IMR-90 (cell line): ENCODE measurements at regions of chr2 and their contacts with region 1.

Region 1: DNA sequence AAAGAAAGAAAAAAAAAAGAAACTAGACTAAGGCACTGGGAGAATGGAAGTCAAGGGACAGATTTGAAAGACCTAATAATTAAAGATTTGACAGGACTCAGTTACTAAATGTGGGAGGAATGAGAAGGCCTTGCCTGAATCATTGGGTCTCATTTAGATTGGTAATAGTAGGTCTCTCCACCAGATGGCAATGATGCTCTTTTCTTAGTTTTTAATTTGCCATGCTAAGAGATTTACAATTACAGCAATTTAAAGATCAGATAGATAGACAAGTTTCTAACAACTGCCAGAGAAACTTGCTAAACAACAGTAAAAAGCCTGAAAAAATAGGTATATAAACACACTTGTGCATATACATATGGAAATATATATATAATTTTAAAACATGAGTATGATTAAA is 153.0 kb downstream of the TMEM247 start:
- DNase-seq: peak; percentile 77
- ATAC-seq: peak; percentile 89
- H3K4me3 ChIP-seq: no peak overlapping the region
- H3K27ac ChIP-seq: no peak overlapping the region
- H3K4me1 ChIP-seq: 0 out of 2 replicates have a peak, but pooled peaks cover 1% of the 10 kb centered on the region
- H3K27me3 ChIP-seq: no peaks in the 10 kb centered on the region
- CTCF ChIP-seq: peak; percentile 78
- POLR2A ChIP-seq: no peak
- RAD21 ChIP-seq: peak; percentile 84

Region 2: DNA sequence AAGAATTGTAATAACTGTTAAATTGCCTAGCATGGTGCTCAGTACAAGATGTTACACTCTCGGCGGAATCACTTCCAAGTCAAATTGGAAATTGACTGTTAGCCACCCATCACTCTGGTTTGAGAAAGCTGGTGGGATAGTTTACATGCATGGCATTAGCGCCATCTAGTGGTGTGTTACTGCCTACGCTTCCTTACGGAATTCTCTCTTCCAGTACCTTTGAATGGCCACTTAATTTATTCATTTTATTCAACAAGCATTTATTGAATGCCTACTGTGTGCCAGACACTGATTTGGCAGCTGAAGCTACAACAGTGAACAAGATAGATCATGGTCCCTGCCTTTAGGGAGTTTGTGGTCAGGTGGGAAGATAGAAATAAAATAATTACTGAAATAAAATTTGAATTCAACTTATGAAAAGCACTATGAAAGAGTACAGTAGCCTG is 18.2 kb after region 1 on chr2:
- CTCF ChIA-PET with region 1: interaction called, 5 read pairs
- POLR2A ChIA-PET with region 1: no interaction called
- dilution Hi-C with region 1: no loop called
- in situ Hi-C with region 1: no loop called
- intact Hi-C with region 1: loop called (anchors 1 kb)
- DNase-seq: peak; percentile 90
- ATAC-seq: peak; percentile 25
- H3K4me3 ChIP-seq: no peak overlapping the region
- H3K27ac ChIP-seq: no peak overlapping the region
- H3K4me1 ChIP-seq: peaks cover 28% of the 10 kb centered on the region
- H3K27me3 ChIP-seq: no peaks in the 10 kb centered on the region
- CTCF ChIP-seq: peak; percentile 95
- POLR2A ChIP-seq: peak; percentile 37; the same call in 1 of the 2 replicates
- RAD21 ChIP-seq: peak; percentile 90

Region 3: DNA sequence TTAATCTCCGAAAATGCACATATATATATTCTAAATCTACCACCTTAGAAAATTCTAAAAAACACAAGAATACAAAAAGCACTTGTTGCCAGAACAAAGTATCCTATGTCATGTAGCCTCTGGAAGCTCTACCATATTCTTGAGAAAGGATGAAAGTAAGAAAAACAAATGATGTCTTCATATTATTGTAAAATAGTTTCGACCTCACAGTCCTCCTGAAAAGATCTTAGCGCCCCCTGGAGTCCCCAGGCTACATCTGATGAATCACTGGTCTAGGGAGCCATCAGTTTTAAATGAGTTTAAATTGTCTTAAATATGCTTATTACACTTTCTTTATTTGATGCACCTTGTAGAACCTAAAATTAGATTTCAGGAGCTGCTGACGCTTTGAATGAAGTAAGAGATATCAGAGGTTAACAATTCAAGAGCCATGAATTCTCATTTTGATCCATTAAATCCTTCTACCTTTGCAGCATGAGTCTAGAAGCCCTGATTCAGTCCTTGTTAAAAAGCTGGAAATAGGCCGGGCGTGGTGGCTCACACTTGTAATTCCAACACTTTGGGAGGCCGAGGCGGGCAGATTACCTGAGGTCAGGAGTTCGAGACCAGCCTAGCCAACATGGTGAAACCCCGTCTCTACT is 144.5 kb after region 1 on chr2:
- CTCF ChIA-PET with region 1: no interaction called
- POLR2A ChIA-PET with region 1: no interaction called
- dilution Hi-C with region 1: no loop called
- in situ Hi-C with region 1: no loop called
- intact Hi-C with region 1: loop called (anchors 2 kb)
- DNase-seq: peak; percentile 79
- ATAC-seq: peak; percentile 56
- H3K4me3 ChIP-seq: no peak overlapping the region
- H3K27ac ChIP-seq: peak overlapping the region; percentile 31; the same call in 1 of the 2 replicates
- H3K4me1 ChIP-seq: peaks cover 26% of the 10 kb centered on the region
- H3K27me3 ChIP-seq: no peaks in the 10 kb centered on the region
- CTCF ChIP-seq: peak; percentile 86
- POLR2A ChIP-seq: no peak
- RAD21 ChIP-seq: peak; percentile 73

Region 4: DNA sequence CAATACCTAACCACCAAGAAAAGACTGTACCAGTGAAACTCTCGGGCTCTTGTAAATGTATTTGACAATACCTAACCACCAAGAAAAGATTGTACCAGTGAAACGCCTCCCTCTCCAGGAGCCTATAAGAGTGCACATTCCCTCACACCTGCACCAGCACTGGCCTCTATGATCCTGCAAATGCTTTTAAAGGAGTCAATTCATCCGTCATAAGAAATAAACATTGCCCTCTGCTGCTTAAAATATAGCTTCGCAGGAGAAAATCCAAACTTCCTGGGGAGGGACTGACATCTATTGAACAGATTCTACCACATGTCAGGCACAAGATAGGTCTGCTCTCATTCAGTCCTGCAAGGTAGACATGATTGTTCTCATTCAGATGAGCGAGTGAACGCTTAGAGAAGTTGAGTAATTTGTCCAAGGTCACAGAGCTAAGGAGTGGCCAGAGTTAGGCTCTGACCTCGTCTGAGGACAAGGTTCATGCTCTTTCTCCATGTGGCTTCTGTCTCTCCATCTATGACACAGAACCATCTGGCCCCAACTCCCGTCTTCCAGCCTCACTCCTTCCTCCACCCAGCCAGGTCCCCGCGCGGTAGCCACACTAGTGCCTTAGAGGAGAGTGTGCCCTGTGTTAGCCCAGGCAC is 244.5 kb after region 1 on chr2:
- CTCF ChIA-PET with region 1: no interaction called
- POLR2A ChIA-PET with region 1: no interaction called
- dilution Hi-C with region 1: no loop called
- in situ Hi-C with region 1: no loop called
- intact Hi-C with region 1: loop called (anchors 2 kb)
- DNase-seq: peak; percentile 88
- ATAC-seq: peak; percentile 10
- H3K4me3 ChIP-seq: no peak overlapping the region
- H3K27ac ChIP-seq: peak overlapping the region; percentile 72
- H3K4me1 ChIP-seq: peaks cover 49% of the 10 kb centered on the region
- H3K27me3 ChIP-seq: no peaks in the 10 kb centered on the region
- CTCF ChIP-seq: peak; percentile 71
- POLR2A ChIP-seq: no peak
- RAD21 ChIP-seq: peak; percentile 77

Region 5: GRCh38 chr2:46887028-46887885 is 254.9 kb after region 1 on chr2:
- CTCF ChIA-PET with region 1: interaction called, 7 read pairs
- POLR2A ChIA-PET with region 1: no interaction called
- dilution Hi-C with region 1: no loop called
- in situ Hi-C with region 1: no loop called
- intact Hi-C with region 1: loop called (anchors 1 kb)
- DNase-seq: peak; percentile 60
- ATAC-seq: peak; percentile 25; the same call in 1 of the 2 replicates
- H3K4me3 ChIP-seq: no peak overlapping the region
- H3K27ac ChIP-seq: peak overlapping the region; percentile 92
- H3K4me1 ChIP-seq: peaks cover 32% of the 10 kb centered on the region
- H3K27me3 ChIP-seq: no peaks in the 10 kb centered on the region
- CTCF ChIP-seq: no peak
- POLR2A ChIP-seq: no peak
- RAD21 ChIP-seq: no peak